GM12878 (cell line): ENCODE measurements at regions of chr11 and their contacts with region 1.

Region 1: GRCh38 chr11:86608251-86608799 is 64.1 kb downstream of the ME3 start:
- DNase-seq: peak; percentile 21
- ATAC-seq: peak; percentile 96
- H3K4me3 ChIP-seq: no peak overlapping the region
- H3K27ac ChIP-seq: no peak overlapping the region
- H3K4me1 ChIP-seq: no peaks in the 10 kb centered on the region
- H3K27me3 ChIP-seq: no peaks in the 10 kb centered on the region
- CTCF ChIP-seq: peak; percentile 68 to 92 (median 88)
- EP300 ChIP-seq: no peak
- POLR2A ChIP-seq: no peak
- RAD21 ChIP-seq: peak; percentile 58

Region 2: DNA sequence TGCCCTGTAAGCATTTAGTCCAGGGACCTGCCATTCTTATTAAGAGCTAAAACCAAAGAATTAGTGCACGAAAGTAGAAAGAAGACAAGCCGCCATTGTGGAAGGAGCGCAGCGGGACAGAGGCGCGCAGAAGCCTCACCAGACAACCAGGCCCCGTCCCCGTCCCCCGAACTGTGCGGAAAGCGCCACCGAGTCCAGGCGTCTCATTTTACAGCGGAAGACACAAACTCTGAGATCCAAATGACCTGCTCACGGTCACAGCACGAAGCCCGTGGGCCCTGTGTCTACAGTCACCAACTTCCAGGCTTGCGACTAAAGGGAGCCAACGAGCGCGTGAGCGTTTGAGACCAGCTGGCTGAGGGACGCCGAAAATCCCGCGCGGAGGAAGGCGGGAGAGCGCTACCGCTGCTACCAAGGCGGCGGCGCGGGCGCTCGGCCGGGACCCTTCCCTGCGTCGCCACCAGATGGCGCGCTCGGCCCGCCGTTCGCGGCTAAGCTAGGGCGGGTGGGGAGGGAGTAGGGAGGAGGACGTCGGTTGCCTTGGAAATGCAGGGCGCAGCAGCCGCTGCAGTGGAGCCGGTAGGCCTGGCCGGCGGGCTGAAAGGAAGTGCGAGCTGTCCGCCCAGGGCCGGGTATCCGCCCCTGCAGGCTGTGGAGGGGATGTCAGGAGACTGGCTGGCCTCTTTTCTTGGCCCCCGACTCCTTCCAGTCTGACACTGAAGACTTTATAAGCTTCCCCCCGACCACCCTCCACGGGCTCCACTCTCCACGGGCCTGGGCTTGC is 753.6 kb before region 1 on chr11:
- CTCF ChIA-PET with region 1: no interaction called
- POLR2A ChIA-PET with region 1: no interaction called
- RAD21 ChIA-PET with region 1: interaction called, 6 read pairs
- SMC1A ChIA-PET with region 1: no interaction called
- in situ Hi-C with region 1: no loop called
- intact Hi-C with region 1: loop called (anchors 1 kb)
- DNase-seq: peak; percentile 57
- ATAC-seq: peak; percentile 100
- H3K4me3 ChIP-seq: peak overlapping the region; percentile 75
- H3K27ac ChIP-seq: peak overlapping the region; percentile 27; the same call in 1 of the 2 replicates
- H3K4me1 ChIP-seq: peaks cover 8% of the 10 kb centered on the region
- H3K27me3 ChIP-seq: no peaks in the 10 kb centered on the region
- CTCF ChIP-seq: peak; percentile 77 to 95 (median 82)
- EP300 ChIP-seq: no peak
- POLR2A ChIP-seq: peak; percentile 71
- RAD21 ChIP-seq: peak; percentile 83

Region 3: DNA sequence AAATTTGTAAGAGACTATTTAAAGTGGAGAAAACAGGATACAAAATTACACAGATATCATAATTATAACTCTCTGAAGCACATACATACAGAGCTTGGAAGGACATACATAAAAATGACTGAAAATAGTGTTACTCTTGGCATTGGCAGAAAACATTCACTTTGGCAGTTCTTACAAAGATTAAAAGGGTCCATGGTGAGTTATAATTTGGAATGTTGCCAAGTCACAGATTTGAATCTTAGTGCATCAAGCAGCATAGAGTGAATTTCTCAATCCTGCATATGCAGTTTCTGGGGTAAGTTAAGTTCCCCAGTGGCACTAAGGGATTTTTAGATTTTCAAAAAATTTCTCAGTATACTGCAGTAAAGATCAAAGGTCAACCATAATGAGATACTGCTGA is 117.7 kb before region 1 on chr11:
- CTCF ChIA-PET with region 1: interaction called, 49 read pairs
- POLR2A ChIA-PET with region 1: interaction called, 3 read pairs
- RAD21 ChIA-PET with region 1: interaction called, 9 read pairs
- SMC1A ChIA-PET with region 1: interaction called, 25 read pairs
- in situ Hi-C with region 1: no loop called
- intact Hi-C with region 1: no loop called
- DNase-seq: no peak
- ATAC-seq: no peak
- H3K4me3 ChIP-seq: no peak overlapping the region
- H3K27ac ChIP-seq: no peak overlapping the region
- H3K4me1 ChIP-seq: no peaks in the 10 kb centered on the region
- H3K27me3 ChIP-seq: peaks cover 0 to 1% of the 10 kb centered on the region in 2 experiments; a peak in 3 of 4 replicates
- CTCF ChIP-seq: no peak
- EP300 ChIP-seq: no peak
- POLR2A ChIP-seq: no peak
- RAD21 ChIP-seq: no peak

Region 4: DNA sequence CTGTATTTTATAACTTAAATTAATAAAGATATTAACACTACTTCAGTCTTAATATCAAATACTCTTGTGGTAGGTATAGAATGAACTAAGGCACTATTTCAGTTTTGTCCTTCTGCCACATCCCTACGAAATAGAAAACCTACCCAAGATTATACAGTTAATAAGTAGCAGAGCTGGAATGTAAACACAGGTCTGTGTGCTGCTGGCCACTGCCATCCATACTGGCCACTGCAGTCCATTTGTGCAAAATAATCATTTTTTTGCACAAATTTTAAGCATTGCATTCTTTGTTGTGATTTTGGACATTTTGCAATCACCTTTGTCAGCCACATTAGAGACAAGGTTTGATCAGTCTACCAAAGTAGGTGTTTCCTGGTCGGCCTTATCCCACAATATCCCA is 27.8 kb before region 1 on chr11:
- CTCF ChIA-PET with region 1: interaction called, 17 read pairs
- POLR2A ChIA-PET with region 1: no interaction called
- RAD21 ChIA-PET with region 1: no interaction called
- SMC1A ChIA-PET with region 1: interaction called, 5 read pairs
- in situ Hi-C with region 1: no loop called
- intact Hi-C with region 1: loop called (anchors 2 kb)
- DNase-seq: no peak
- ATAC-seq: no peak
- H3K4me3 ChIP-seq: no peak overlapping the region
- H3K27ac ChIP-seq: no peak overlapping the region
- H3K4me1 ChIP-seq: no peaks in the 10 kb centered on the region
- H3K27me3 ChIP-seq: peaks cover 1 to 2% of the 10 kb centered on the region in 2 experiments; a peak in 3 of 4 replicates
- CTCF ChIP-seq: no peak
- EP300 ChIP-seq: no peak
- POLR2A ChIP-seq: no peak
- RAD21 ChIP-seq: no peak

Region 5: DNA sequence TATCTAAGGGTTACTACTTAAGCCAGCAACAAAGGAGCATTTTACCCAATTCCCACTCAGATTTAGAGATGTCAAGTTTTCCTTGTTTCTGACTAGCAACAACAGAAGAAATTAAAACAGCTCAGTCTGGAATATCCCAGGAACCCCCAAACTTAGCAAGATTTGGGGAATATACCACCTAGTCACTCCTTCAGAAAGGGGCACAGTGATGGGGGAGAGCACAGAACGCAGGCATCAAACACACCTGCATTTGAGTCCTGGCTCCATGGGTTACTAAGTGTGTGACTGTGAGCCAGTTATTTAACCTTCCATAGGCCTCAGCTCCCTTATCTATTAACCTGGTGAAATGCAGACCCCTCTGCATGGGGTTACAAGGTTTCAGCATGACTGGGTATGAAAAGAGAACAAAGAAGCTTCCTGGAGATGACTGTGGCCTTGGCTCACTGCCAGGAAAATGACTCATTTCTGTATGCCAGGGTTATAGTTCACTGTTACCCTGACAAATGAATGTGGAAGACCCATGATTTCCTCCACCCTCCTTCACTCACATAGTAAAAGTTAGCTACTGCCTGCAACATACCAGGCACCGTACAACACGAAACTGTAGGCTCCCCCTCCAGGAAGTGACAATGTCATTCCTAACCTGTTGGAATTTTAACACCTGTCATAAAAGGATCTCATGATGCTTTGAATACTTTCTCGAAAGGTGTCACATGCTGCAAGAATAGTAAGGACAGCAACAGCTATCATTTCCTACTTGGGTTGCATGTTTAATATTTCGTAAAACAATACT is 15.5 kb before region 1 on chr11:
- CTCF ChIA-PET with region 1: interaction called, 19 read pairs
- POLR2A ChIA-PET with region 1: no interaction called
- RAD21 ChIA-PET with region 1: interaction called, 24 read pairs
- SMC1A ChIA-PET with region 1: interaction called, 18 read pairs
- in situ Hi-C with region 1: no loop called
- intact Hi-C with region 1: no loop called
- DNase-seq: peak; percentile 96
- ATAC-seq: peak; percentile 95
- H3K4me3 ChIP-seq: no peak overlapping the region
- H3K27ac ChIP-seq: peak overlapping the region; percentile 47
- H3K4me1 ChIP-seq: peaks cover 12% of the 10 kb centered on the region
- H3K27me3 ChIP-seq: no peaks in the 10 kb centered on the region
- CTCF ChIP-seq: no peak
- EP300 ChIP-seq: peak; percentile 73 to 94
- POLR2A ChIP-seq: no peak
- RAD21 ChIP-seq: no peak

Region 6: DNA sequence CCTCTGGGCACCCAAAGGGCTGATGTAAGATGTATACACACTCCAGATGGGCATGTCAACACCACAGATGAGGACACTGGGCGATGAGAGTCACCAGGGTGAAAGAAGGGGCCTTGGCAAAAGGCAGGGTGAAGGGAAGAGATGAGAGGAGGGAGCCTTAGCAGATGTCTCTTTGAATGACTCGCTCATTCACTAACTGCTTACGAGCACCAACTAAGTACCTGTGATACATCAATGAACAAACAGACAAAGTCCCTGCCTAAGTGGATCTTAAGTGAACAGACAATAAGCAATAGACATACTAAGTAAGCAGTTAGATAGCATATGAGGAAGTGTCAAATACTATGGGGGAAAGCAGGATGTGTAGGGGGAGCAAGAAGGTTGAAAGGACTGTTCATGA is 56.6 kb after region 1 on chr11:
- CTCF ChIA-PET with region 1: no interaction called
- POLR2A ChIA-PET with region 1: no interaction called
- RAD21 ChIA-PET with region 1: no interaction called
- SMC1A ChIA-PET with region 1: no interaction called
- in situ Hi-C with region 1: no loop called
- intact Hi-C with region 1: no loop called
- DNase-seq: no peak
- ATAC-seq: no peak
- H3K4me3 ChIP-seq: no peak overlapping the region
- H3K27ac ChIP-seq: no peak overlapping the region
- H3K4me1 ChIP-seq: no peaks in the 10 kb centered on the region
- H3K27me3 ChIP-seq: peaks cover 0 to 2% of the 10 kb centered on the region in 2 experiments; a peak in 1 of 4 replicates
- CTCF ChIP-seq: no peak
- EP300 ChIP-seq: no peak
- POLR2A ChIP-seq: no peak
- RAD21 ChIP-seq: no peak

Region 7: GRCh38 chr11:86990515-86990914 is 382.2 kb after region 1 on chr11:
- CTCF ChIA-PET with region 1: no interaction called
- POLR2A ChIA-PET with region 1: no interaction called
- RAD21 ChIA-PET with region 1: no interaction called
- SMC1A ChIA-PET with region 1: no interaction called
- in situ Hi-C with region 1: no loop called
- intact Hi-C with region 1: no loop called
- DNase-seq: no peak
- ATAC-seq: no peak
- H3K4me3 ChIP-seq: no peak overlapping the region
- H3K27ac ChIP-seq: no peak overlapping the region
- H3K4me1 ChIP-seq: no peaks in the 10 kb centered on the region
- H3K27me3 ChIP-seq: no peaks in the 10 kb centered on the region
- CTCF ChIP-seq: no peak
- EP300 ChIP-seq: no peak
- POLR2A ChIP-seq: no peak
- RAD21 ChIP-seq: no peak

Region 8: GRCh38 chr11:87597725-87598124 is 989.4 kb after region 1 on chr11:
- CTCF ChIA-PET with region 1: no interaction called
- POLR2A ChIA-PET with region 1: no interaction called
- RAD21 ChIA-PET with region 1: no interaction called
- SMC1A ChIA-PET with region 1: no interaction called
- in situ Hi-C with region 1: no loop called
- intact Hi-C with region 1: no loop called
- DNase-seq: no peak
- ATAC-seq: no peak
- H3K4me3 ChIP-seq: no peak overlapping the region
- H3K27ac ChIP-seq: no peak overlapping the region
- H3K4me1 ChIP-seq: no peaks in the 10 kb centered on the region
- H3K27me3 ChIP-seq: no peaks in the 10 kb centered on the region
- CTCF ChIP-seq: no peak
- EP300 ChIP-seq: no peak
- POLR2A ChIP-seq: no peak
- RAD21 ChIP-seq: no peak